Activated CD4-positive, alpha-beta T cell treated with anti-CD3 and anti-CD28 coated beads, Interleukin-2, amount 10 ng/mL, durations not matched to agents 24 days and 14 days (primary cell): ENCODE measurements at regions of chr15 and their contacts with region 1.

Region 1: DNA sequence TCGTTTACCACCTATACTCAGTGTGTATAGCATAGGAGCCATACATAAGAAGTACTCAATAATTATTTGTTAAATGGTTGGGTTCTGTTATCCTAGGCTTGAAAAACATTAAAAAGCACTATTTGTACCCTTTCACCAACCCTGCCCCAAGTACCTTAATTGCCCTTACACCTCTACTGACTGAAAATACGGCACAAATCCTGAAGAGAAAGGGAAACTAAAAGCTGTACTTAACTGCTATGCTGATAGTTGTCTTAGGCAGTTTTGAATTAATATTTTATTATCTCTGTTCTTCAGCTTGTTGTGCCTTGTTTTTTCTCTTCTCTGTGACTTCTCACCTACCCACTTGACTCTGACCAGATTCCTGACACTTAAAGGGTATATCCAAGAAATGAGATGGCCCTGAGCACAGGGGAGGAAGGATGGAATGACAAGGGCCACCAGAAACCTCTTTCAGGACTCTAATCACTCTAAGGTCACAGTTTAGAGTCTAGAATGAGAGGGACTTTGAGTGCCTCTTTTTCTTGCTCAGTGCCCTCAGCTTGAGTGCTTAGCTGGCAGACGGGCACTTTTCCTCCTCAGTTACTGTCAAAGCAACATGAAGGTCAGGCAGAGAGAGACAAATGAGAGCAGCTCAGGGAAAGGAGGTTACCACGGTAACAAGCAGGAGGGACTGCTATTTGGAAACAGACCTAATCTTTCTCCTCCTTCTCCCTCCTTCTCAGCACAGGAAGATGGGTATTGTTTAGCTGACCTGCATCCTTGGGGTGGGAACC is 136.5 kb downstream of the ZNF609 start:
- DNase-seq: peak; percentile 79
- H3K4me3 Mint-ChIP-seq: peak overlapping the region; percentile 85
- H3K27ac Mint-ChIP-seq: peak overlapping the region; percentile 90
- H3K4me1 Mint-ChIP-seq: peaks cover 50% of the 10 kb centered on the region
- H3K27me3 Mint-ChIP-seq: no peaks in the 10 kb centered on the region

Region 2: DNA sequence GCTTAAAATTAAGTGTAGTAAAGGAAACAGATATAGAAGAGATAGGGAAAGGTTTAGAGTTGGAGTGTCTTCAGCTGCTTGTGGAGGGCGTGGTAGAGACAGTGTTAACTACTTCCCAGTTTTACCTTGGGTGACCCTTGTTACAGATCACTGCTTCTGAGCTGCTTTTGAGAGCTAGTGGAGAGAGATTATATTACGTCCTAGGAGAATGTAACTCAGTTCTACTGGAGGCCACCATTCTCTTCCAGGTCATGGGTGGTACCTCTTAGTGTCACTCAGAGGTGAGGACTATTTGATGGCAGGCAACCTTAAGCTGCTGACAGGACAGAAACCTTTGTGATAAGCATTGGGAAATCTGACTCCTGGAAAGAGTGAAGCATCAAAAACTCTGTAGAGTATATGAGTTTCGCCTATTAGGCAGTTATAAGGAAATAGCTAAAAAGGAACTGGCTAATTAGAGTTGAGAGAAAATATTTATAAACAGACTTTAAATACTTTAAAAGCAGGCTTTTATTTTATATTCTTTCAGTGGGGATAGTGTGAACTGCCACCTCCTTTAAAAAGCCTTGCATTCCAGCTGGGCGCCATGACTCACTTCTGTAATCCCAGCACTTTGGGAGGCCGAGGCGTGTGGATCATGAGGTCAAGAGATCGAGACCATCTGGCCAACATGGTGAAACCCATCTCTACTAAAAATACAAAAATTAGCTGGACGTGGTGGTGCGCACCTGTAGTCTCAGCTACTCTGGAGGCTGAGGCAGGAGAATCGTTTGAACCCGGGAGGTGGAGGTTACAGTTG is 30.1 kb before region 1 on chr15:
- intact Hi-C with region 1: loop called (anchors 5 kb)
- DNase-seq: no peak
- H3K4me3 Mint-ChIP-seq: no peak overlapping the region
- H3K27ac Mint-ChIP-seq: no peak overlapping the region
- H3K4me1 Mint-ChIP-seq: peaks cover 43% of the 10 kb centered on the region
- H3K27me3 Mint-ChIP-seq: no peaks in the 10 kb centered on the region

Region 3: DNA sequence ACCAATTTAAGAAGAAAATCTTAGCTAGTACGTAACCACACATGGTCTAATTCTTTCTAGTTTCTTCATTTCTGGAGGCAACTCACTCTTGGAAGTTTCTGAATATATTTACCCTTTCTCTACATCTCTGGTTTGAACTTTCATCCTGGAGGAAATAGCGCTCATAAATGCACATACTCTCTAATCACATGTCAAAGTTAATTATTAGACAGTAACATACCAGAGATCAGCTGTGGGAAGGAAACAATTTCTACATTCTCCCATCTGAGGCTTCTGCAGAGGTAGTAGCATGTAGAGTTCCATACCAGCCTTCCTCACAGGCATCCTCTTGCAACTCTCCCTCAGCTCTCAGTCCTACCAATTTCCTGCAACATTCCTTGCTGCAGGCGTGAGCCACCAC is 46.0 kb after region 1 on chr15:
- intact Hi-C with region 1: no loop called
- DNase-seq: no peak
- H3K4me3 Mint-ChIP-seq: no peak overlapping the region
- H3K27ac Mint-ChIP-seq: no peak overlapping the region
- H3K4me1 Mint-ChIP-seq: peaks cover 30% of the 10 kb centered on the region
- H3K27me3 Mint-ChIP-seq: no peaks in the 10 kb centered on the region

Region 4: GRCh38 chr15:64667736-64668161 is 70.9 kb after region 1 on chr15:
- intact Hi-C with region 1: no loop called
- DNase-seq: no peak
- H3K4me3 Mint-ChIP-seq: no peak overlapping the region
- H3K27ac Mint-ChIP-seq: no peak overlapping the region
- H3K4me1 Mint-ChIP-seq: peaks cover 3% of the 10 kb centered on the region
- H3K27me3 Mint-ChIP-seq: no peaks in the 10 kb centered on the region